Sciatic nerve (tissue), 2 donors: ENCODE measurements at regions of chr7 and their contacts with region 1.

Region 1: GRCh38 chr7:16918288-16918895 is 36.6 kb upstream of the AGR3 start:
- DNase-seq: no peak
- ATAC-seq: no peak

Region 2: DNA sequence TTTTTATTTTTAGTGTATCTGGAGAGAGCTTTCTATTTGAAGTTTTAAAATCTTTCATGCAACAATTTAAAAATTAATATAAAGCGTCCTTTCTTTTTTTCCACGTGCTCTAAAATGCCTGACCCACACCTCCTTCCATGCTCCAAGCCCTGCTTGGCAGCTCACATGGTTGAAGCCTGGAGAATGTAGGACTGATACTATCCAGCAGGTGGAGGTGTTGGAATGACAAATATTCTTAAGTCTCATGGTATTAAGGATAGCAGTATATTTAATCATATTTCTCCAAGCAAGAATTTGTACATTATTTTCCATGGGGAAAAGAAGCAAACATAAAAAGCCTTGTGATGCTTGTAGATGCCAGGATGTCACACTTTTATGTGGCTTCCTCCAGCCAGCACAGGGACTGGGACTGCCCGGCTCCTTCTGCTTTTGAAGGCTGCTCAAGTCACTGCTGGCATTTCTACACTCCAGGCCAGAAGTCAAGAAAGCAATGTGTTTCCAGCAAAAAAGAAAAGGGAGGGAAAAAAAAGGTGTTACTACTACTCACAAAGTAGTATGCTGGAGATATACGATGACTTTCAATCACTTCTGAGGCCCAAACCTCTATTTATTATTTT is 222.7 kb before region 1 on chr7:
- intact Hi-C with region 1: loop called (anchors 10 kb)
- DNase-seq: no peak
- ATAC-seq: peak; percentile 59

Region 3: GRCh38 chr7:16801111-16801542 is 117.3 kb before region 1 on chr7:
- intact Hi-C with region 1: loop called (anchors 10 kb)
- DNase-seq: no peak
- ATAC-seq: no peak